ENCODE measurements at regions of chr15 and their contacts with region 1.

Region 1: GRCh38 chr15:85296615-85297402 is 83.6 kb upstream of the AKAP13 start:
- DNase-seq: peak; percentile 85
- ATAC-seq: peak; percentile 97
- H3K4me3 ChIP-seq: peak overlapping the region; percentile 31 to 66
- H3K27ac ChIP-seq: peak overlapping the region; percentile 54; the same call in 1 of the 2 replicates
- H3K4me1 ChIP-seq: no peaks in the 10 kb centered on the region
- H3K27me3 ChIP-seq: no peaks in the 10 kb centered on the region
- CTCF ChIP-seq: peak; percentile 89

Region 2: DNA sequence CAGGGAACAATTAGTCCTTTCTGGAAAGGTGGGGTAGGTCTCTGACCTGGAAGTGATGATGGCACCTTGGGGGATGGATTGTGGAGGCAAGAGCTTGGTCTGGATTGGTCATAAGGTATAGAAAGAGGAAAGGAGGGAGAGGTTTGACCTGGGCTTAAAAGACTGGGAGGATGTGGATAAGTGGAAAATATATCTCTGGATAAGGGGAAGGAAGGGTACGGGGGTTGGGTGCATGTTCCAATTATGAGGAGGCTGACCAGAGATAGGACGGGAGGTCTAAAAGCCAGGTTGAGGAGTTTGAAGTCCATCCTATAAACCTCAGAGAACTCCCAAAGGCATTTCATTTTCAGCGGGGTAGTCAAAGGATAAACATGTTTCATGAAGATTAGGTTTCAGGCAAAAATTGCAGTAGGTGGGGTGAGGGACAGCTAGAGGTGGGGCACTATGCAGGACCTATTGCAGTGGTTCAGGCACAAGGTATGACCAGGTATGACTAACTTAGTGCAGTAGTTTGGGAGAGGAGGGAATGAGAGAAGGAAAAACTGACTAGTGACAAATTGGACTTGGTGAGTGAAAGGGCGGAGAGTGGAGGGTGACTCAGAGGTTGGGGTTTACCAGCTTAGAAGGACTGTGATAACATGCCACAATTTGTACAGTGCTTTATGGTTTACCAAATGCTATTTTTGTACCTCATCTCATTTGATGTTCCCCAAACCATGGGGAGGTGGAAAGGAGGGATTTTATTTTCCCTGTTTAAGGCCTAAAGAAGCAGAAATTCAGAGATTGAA is 304.5 kb before region 1 on chr15:
- CTCF ChIA-PET with region 1: no interaction called
- POLR2A ChIA-PET with region 1: no interaction called
- in situ Hi-C with region 1: no loop called
- intact Hi-C with region 1: no loop called
- DNase-seq: peak; percentile 84
- ATAC-seq: peak; percentile 93
- H3K4me3 ChIP-seq: no peak overlapping the region
- H3K27ac ChIP-seq: no peak overlapping the region
- H3K4me1 ChIP-seq: peaks cover 9% of the 10 kb centered on the region; the same call in 1 of the 2 replicates
- H3K27me3 ChIP-seq: no peaks in the 10 kb centered on the region
- CTCF ChIP-seq: no peak

Region 3: DNA sequence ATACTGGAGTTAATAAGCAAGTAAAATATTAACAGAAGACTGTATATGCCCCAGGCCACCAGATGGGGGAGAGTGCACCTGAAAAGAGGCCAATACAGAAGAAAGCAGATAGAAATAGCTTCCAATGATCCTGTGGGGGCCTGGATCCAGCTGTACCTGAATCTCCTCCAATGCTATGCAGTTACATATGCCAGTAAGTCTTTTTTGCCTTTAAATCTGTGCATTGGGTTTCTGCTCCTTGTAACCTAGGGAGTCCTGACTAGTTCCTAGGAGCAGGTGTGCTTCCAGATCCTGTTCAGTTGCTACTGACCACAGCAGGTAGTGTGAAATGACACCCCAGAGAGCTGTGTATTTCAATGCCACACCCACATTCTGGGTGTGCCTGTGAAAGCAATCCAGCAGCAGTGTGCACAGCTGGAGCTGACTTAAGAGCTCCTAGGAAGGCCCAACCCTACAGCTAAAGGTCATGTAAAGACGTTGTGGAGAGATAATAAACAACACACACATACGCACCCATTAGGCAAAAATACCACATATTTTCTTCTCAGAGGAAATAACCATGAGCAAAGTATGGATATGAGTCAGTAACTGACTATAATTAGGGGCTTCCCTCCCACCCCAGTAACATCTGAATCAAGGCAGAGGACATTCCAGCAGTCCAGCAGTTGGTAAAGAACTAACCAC is 21.4 kb after region 1 on chr15:
- CTCF ChIA-PET with region 1: no interaction called
- POLR2A ChIA-PET with region 1: no interaction called
- in situ Hi-C with region 1: no loop called
- intact Hi-C with region 1: no loop called
- DNase-seq: no peak
- ATAC-seq: peak; percentile 86
- H3K4me3 ChIP-seq: no peak overlapping the region
- H3K27ac ChIP-seq: no peak overlapping the region
- H3K4me1 ChIP-seq: no peaks in the 10 kb centered on the region
- H3K27me3 ChIP-seq: no peaks in the 10 kb centered on the region
- CTCF ChIP-seq: peak; percentile 33

Region 4: GRCh38 chr15:85351960-85352359 is 55.2 kb after region 1 on chr15:
- CTCF ChIA-PET with region 1: no interaction called
- POLR2A ChIA-PET with region 1: no interaction called
- in situ Hi-C with region 1: no loop called
- intact Hi-C with region 1: no loop called
- DNase-seq: no peak
- ATAC-seq: peak; percentile 39; the same call in 1 of the 2 replicates
- H3K4me3 ChIP-seq: no peak overlapping the region
- H3K27ac ChIP-seq: no peak overlapping the region
- H3K4me1 ChIP-seq: peaks cover 6% of the 10 kb centered on the region
- H3K27me3 ChIP-seq: no peaks in the 10 kb centered on the region
- CTCF ChIP-seq: no peak

Region 5: GRCh38 chr15:85412956-85413854 is 116.4 kb after region 1 on chr15:
- CTCF ChIA-PET with region 1: interaction called, 10 read pairs
- POLR2A ChIA-PET with region 1: no interaction called
- in situ Hi-C with region 1: no loop called
- intact Hi-C with region 1: no loop called
- DNase-seq: peak; percentile 97
- ATAC-seq: peak; percentile 97
- H3K4me3 ChIP-seq: peak overlapping the region; percentile 27 to 54
- H3K27ac ChIP-seq: peak overlapping the region; percentile 95
- H3K4me1 ChIP-seq: peaks cover 60% of the 10 kb centered on the region
- H3K27me3 ChIP-seq: no peaks in the 10 kb centered on the region
- CTCF ChIP-seq: no peak

Region 6: GRCh38 chr15:85559530-85559929 is 262.7 kb after region 1 on chr15:
- CTCF ChIA-PET with region 1: no interaction called
- POLR2A ChIA-PET with region 1: interaction called, 14 read pairs
- in situ Hi-C with region 1: no loop called
- intact Hi-C with region 1: no loop called
- DNase-seq: no peak
- ATAC-seq: no peak
- H3K4me3 ChIP-seq: no peak overlapping the region
- H3K27ac ChIP-seq: no peak overlapping the region
- H3K4me1 ChIP-seq: no peaks in the 10 kb centered on the region
- H3K27me3 ChIP-seq: no peaks in the 10 kb centered on the region
- CTCF ChIP-seq: no peak

Region 7: GRCh38 chr15:85707519-85708338 is 410.9 kb after region 1 on chr15:
- CTCF ChIA-PET with region 1: no interaction called
- POLR2A ChIA-PET with region 1: interaction called, 10 read pairs
- in situ Hi-C with region 1: no loop called
- intact Hi-C with region 1: loop called (anchors 10 kb)
- DNase-seq: no peak
- ATAC-seq: no peak
- H3K4me3 ChIP-seq: peak overlapping the region in 1 of 2 experiments; percentile 14; a peak in 1 of 4 replicates
- H3K27ac ChIP-seq: peak overlapping the region; percentile 55; the same call in 1 of the 2 replicates
- H3K4me1 ChIP-seq: peaks cover 11% of the 10 kb centered on the region
- H3K27me3 ChIP-seq: no peaks in the 10 kb centered on the region
- CTCF ChIP-seq: no peak

Measured in Panc1 (cell line).